Mammary epithelial cell (primary cell): ENCODE measurements at regions of chr5 and their contacts with region 1.

Region 1: DNA sequence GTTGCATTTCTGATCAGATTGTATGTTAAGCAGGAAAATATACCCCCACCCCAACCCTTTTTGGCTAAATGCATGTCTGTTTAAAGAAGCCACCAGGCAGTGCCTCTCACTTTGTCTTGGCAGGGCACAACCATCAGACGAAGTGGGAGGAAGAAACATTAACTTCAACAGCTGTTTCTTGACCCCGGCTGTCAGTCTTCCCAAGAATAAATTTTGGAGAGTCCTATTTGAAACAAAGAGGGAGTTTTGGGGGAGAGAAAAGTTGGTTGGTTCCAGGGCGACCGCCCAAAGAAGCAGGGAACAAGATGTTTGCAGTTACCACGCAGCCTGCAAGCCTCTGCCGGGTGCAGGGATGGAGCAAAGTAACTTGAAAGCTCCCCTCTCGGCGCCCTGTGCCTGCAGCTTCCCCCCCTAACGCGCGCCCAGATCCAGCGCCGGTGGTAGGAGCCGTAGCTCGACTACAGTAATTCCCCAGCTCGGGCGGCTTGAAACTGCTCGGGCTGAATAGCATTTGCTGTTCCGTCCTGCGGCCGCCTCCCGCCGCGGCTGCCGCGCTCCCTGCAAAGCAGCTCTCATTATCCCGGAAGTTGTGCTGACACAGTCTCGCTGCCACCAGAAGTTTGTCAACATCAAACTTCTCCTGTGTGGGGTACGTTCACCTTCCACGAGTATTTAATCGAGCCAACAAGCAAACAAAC is 100.7 kb upstream of the SSBP2 start:
- DNase-seq: peak; percentile 84
- H3K4me3 ChIP-seq: peak overlapping the region; percentile 30 to 36 (median 36)
- H3K27ac ChIP-seq: no peak overlapping the region
- H3K4me1 ChIP-seq: peaks cover 44% of the 10 kb centered on the region
- H3K27me3 ChIP-seq: no peaks in the 10 kb centered on the region
- CTCF ChIP-seq: no peak

Region 2: GRCh38 chr5:81425569-81425968 is 426.1 kb before region 1 on chr5:
- CTCF ChIA-PET with region 1: no interaction called
- dilution Hi-C with region 1: no loop called
- in situ Hi-C with region 1: no loop called
- intact Hi-C with region 1: loop called (anchors 5 kb)
- DNase-seq: peak; percentile 27
- H3K4me3 ChIP-seq: no peak overlapping the region
- H3K27ac ChIP-seq: no peak overlapping the region
- H3K4me1 ChIP-seq: peaks cover 7% of the 10 kb centered on the region
- H3K27me3 ChIP-seq: no peaks in the 10 kb centered on the region
- CTCF ChIP-seq: peak; percentile 44 to 48

Region 3: DNA sequence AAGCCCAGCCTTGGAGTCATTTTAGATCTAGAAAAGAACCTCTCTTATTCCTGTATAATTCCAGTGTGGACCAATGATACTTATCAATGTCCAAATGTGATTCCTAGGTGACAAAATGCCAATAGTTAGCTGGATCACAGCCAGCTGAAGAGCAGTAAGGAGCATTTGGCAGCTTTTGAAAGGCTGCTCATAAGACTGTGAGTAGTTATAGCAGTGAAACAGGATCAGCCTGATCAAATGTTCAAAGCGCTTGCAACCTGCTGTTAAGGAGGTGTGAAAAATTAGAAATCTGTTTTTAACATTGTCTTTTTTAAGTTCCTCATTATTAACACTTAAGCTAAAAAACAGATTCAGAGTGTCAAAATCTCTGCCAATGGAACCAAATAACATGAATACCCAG is 185.8 kb before region 1 on chr5:
- CTCF ChIA-PET with region 1: no interaction called
- dilution Hi-C with region 1: no loop called
- in situ Hi-C with region 1: no loop called
- intact Hi-C with region 1: no loop called
- DNase-seq: no peak
- H3K4me3 ChIP-seq: no peak overlapping the region
- H3K27ac ChIP-seq: no peak overlapping the region
- H3K4me1 ChIP-seq: peaks cover 6% of the 10 kb centered on the region
- H3K27me3 ChIP-seq: no peaks in the 10 kb centered on the region
- CTCF ChIP-seq: no peak

Region 4: GRCh38 chr5:81787474-81788242 is 64.0 kb before region 1 on chr5:
- CTCF ChIA-PET with region 1: interaction called, 3 read pairs
- dilution Hi-C with region 1: no loop called
- in situ Hi-C with region 1: no loop called
- intact Hi-C with region 1: loop called (anchors 1 kb)
- DNase-seq: peak; percentile 66
- H3K4me3 ChIP-seq: no peak overlapping the region
- H3K27ac ChIP-seq: peak overlapping the region; percentile 43
- H3K4me1 ChIP-seq: peaks cover 41% of the 10 kb centered on the region
- H3K27me3 ChIP-seq: no peaks in the 10 kb centered on the region
- CTCF ChIP-seq: no peak

Region 5: GRCh38 chr5:81925981-81926380 is 74.4 kb after region 1 on chr5:
- CTCF ChIA-PET with region 1: no interaction called
- dilution Hi-C with region 1: no loop called
- in situ Hi-C with region 1: no loop called
- intact Hi-C with region 1: no loop called
- DNase-seq: no peak
- H3K4me3 ChIP-seq: no peak overlapping the region
- H3K27ac ChIP-seq: no peak overlapping the region
- H3K4me1 ChIP-seq: no peaks in the 10 kb centered on the region
- H3K27me3 ChIP-seq: no peaks in the 10 kb centered on the region
- CTCF ChIP-seq: no peak

Region 6: GRCh38 chr5:81948349-81948748 is 96.7 kb after region 1 on chr5:
- CTCF ChIA-PET with region 1: no interaction called
- dilution Hi-C with region 1: no loop called
- in situ Hi-C with region 1: no loop called
- intact Hi-C with region 1: no loop called
- DNase-seq: peak; percentile 9
- H3K4me3 ChIP-seq: no peak overlapping the region
- H3K27ac ChIP-seq: no peak overlapping the region
- H3K4me1 ChIP-seq: no peaks in the 10 kb centered on the region
- H3K27me3 ChIP-seq: no peaks in the 10 kb centered on the region
- CTCF ChIP-seq: no peak

Region 7: GRCh38 chr5:81971712-81972495 is 120.3 kb after region 1 on chr5 and contains the start of gene ATG10:
- CTCF ChIA-PET with region 1: no interaction called
- dilution Hi-C with region 1: no loop called
- in situ Hi-C with region 1: no loop called
- intact Hi-C with region 1: loop called (anchors 5 kb)
- DNase-seq: peak; percentile 86
- H3K4me3 ChIP-seq: peak within 1 kb of the TSS; percentile 65 to 81 (median 65)
- H3K27ac ChIP-seq: peak within 1 kb of the TSS; percentile 92
- H3K4me1 ChIP-seq: peaks cover 4% of the 10 kb centered on the region
- H3K27me3 ChIP-seq: no peaks in the 10 kb centered on the region
- CTCF ChIP-seq: no peak
- total RNA-seq, gene ATG10: 7.2 to 12.2 TPM

Region 8: DNA sequence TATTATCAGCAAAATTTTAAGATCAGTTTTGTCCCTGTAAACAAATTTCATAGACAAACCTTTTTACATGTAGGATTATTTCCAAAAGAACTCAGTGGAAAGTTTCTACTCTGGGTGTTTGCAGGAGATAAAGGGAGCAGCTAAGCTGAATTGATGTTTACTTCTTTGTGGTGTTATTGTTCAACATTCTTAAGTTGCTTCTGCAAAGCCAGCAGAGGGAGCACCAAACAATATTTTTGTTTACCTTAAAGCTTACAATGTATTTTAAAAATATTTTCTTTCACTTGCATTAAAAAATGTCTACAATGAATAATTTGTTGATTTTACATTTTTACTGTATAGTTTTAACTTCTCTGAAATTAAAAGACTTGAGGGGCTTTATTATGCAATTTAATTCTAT is 255.6 kb after region 1 on chr5:
- CTCF ChIA-PET with region 1: no interaction called
- dilution Hi-C with region 1: no loop called
- in situ Hi-C with region 1: no loop called
- intact Hi-C with region 1: loop called (anchors 5 kb)
- DNase-seq: no peak
- H3K4me3 ChIP-seq: no peak overlapping the region
- H3K27ac ChIP-seq: no peak overlapping the region
- H3K4me1 ChIP-seq: peaks cover 11% of the 10 kb centered on the region
- H3K27me3 ChIP-seq: no peaks in the 10 kb centered on the region
- CTCF ChIP-seq: peak; percentile 18 to 52

Region 9: DNA sequence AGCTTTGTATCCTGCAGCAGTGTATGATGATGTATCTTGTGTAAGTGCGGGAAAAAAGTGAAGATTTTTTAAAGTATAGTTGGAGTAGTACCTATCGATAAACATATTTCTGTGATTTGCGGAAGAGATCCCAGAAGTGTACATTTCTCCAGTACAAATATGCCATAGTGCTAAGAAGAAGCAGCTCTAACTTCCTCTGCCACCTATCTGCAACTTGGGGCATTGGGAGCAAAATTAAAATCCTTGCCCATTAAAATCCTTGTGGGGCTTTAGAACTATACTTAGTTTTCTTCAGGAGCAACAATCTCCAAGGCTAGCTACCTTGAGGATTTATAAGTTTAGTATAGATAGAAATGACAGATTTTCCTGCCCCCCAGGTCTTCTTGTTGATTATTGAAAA is 1743.6 kb after region 1 on chr5:
- CTCF ChIA-PET with region 1: no interaction called
- dilution Hi-C with region 1: no loop called
- in situ Hi-C with region 1: no loop called
- intact Hi-C with region 1: no loop called
- DNase-seq: no peak
- H3K4me3 ChIP-seq: no peak overlapping the region
- H3K27ac ChIP-seq: no peak overlapping the region
- H3K4me1 ChIP-seq: no peaks in the 10 kb centered on the region
- H3K27me3 ChIP-seq: no peaks in the 10 kb centered on the region
- CTCF ChIP-seq: peak in 1 of 2 donors; percentile 45